Calu3 (cell line): ENCODE measurements at regions of chr16 and their contacts with region 1.

Region 1: GRCh38 chr16:54633943-54634362 is 296.7 kb upstream of the IRX5 start:
- DNase-seq: peak; percentile 21
- H3K4me3 Mint-ChIP-seq: no peak overlapping the region
- H3K27ac Mint-ChIP-seq: no peak overlapping the region
- H3K4me1 Mint-ChIP-seq: no peaks in the 10 kb centered on the region
- H3K27me3 Mint-ChIP-seq: peaks cover 48% of the 10 kb centered on the region
- CTCF ChIP-seq: peak; percentile 27

Region 2: GRCh38 chr16:54766355-54766754 is 132.4 kb after region 1 on chr16:
- CTCF ChIA-PET with region 1: no interaction called
- intact Hi-C with region 1: no loop called
- DNase-seq: no peak
- H3K4me3 Mint-ChIP-seq: no peak overlapping the region
- H3K27ac Mint-ChIP-seq: no peak overlapping the region
- H3K4me1 Mint-ChIP-seq: no peaks in the 10 kb centered on the region
- H3K27me3 Mint-ChIP-seq: no peaks in the 10 kb centered on the region
- CTCF ChIP-seq: no peak

Region 3: GRCh38 chr16:54873071-54873470 is 239.1 kb after region 1 on chr16:
- CTCF ChIA-PET with region 1: no interaction called
- intact Hi-C with region 1: no loop called
- DNase-seq: no peak
- H3K4me3 Mint-ChIP-seq: no peak overlapping the region
- H3K27ac Mint-ChIP-seq: no peak overlapping the region
- H3K4me1 Mint-ChIP-seq: no peaks in the 10 kb centered on the region
- H3K27me3 Mint-ChIP-seq: no peaks in the 10 kb centered on the region
- CTCF ChIP-seq: no peak

Region 4: GRCh38 chr16:54957403-54958171 is 323.6 kb after region 1 on chr16:
- CTCF ChIA-PET with region 1: no interaction called
- intact Hi-C with region 1: loop called (anchors 5 kb)
- DNase-seq: peak; percentile 81
- H3K4me3 Mint-ChIP-seq: no peak overlapping the region
- H3K27ac Mint-ChIP-seq: no peak overlapping the region
- H3K4me1 Mint-ChIP-seq: no peaks in the 10 kb centered on the region
- H3K27me3 Mint-ChIP-seq: peaks cover 33% of the 10 kb centered on the region
- CTCF ChIP-seq: peak; percentile 84